ENCODE measurements at regions of chr14 and their contacts with region 1.

Region 1: DNA sequence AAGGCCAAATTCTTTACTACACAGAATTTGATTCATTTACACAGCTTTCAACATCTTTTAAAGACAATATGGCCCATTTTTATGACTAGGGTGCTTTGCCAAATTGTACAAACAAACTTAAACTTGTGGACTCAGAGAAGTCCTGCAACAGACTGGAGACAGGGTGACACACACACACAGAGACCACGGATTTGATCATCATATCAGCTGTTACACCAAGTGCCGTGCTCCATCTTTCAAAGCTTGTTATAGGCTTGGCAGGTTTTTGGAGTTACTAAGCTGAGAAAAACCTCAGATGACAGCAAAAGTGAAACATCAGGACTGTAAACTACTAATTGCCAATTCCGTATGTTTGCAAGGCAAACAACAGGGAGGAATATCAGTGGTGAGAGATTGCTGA is 811.7 kb downstream of the GALC start:
- DNase-seq: no peak
- H3K4me3 ChIP-seq: no peak overlapping the region
- H3K27ac ChIP-seq: no peak overlapping the region
- H3K4me1 ChIP-seq: no peaks in the 10 kb centered on the region
- H3K27me3 ChIP-seq: no peaks in the 10 kb centered on the region
- CTCF ChIP-seq: no peak
- EP300 ChIP-seq: no peak
- POLR2A ChIP-seq: no peak

Region 2: GRCh38 chr14:87391066-87391465 is 209.8 kb after region 1 on chr14:
- intact Hi-C with region 1: loop called in 1 of 4 experiments (anchors 5 kb)
- DNase-seq: no peak
- H3K4me3 ChIP-seq: no peak overlapping the region
- H3K27ac ChIP-seq: no peak overlapping the region
- H3K4me1 ChIP-seq: no peaks in the 10 kb centered on the region
- H3K27me3 ChIP-seq: no peaks in the 10 kb centered on the region
- CTCF ChIP-seq: no peak
- EP300 ChIP-seq: no peak
- POLR2A ChIP-seq: no peak

Measured in ovary (tissue), 10 donors.